CD8-positive, alpha-beta memory T cell (primary cell): ENCODE measurements at regions of chr7 and their contacts with region 1.

Region 1: DNA sequence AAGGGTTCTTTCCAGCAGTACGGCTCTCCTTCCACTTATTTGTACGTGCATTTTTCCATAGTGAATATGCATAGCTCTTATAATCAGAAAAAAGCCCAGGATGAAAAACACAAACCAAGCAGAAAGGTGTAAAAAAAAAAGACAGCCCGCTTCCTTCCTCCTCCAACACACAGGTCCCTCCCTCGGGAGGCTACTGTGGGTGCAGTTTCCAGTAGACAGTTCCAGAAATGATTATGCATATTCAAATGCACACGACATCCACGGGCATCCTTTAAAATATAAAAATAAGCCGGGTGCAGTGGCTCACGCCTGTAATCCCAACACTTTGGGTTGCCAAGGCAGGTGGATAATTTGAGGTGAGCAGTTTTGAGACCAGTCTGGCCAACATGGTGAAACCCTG is 59.9 kb downstream of the TNRC18 start:
- DNase-seq: no peak
- H3K4me3 ChIP-seq: no peak overlapping the region
- H3K4me3 Mint-ChIP-seq: peak overlapping the region in 3 of 7 donors; percentile 44 to 63 (median 59)
- H3K27ac ChIP-seq: no peak overlapping the region
- H3K27ac Mint-ChIP-seq: peak overlapping the region in 3 of 8 donors; percentile 10 to 64 (median 21)
- H3K4me1 ChIP-seq: peaks cover 5% of the 10 kb centered on the region
- H3K4me1 Mint-ChIP-seq: peaks cover 13 to 26% (median 23%) of the 10 kb centered on the region in 3 donors
- H3K27me3 ChIP-seq: no peaks in the 10 kb centered on the region
- H3K27me3 Mint-ChIP-seq: no peaks in the 10 kb centered on the region

Region 2: DNA sequence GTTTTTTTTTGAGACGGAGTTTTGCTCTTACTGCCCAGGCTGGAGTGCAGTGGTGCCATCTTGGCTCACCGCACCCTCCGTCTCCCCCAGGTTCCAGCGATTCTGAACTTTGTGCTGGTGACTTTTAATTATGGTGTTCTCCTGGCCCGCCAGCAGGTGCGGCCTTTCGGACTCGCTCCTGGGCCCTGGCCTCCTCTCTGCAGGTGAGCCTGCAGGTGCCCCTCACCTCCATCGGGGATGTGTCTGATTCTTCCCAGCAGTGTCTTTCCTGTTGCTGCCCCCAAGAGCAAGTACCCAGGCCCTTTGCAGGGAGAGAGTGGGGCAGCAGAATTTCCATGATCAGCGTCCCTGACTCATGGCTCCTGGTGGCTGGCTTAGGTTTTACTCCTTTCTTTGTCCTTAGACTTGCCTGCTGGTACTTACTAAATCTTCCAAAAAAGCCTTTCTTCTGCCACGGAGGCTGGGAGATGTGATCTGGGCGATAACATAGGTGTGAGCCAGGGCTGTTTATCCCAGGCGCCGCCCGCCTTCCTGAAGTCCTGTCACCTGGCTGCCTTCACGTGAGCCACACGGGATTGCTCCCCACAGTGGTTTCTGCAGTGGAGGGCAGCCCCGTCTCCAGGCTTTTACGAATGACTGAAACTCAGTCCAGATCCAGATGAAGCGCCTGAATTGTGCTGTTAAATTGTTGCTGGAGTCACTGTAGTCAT is 163.0 kb before region 1 on chr7:
- CTCF ChIA-PET with region 1: no interaction called
- POLR2A ChIA-PET with region 1: no interaction called
- DNase-seq: no peak
- H3K4me3 ChIP-seq: no peak overlapping the region
- H3K4me3 Mint-ChIP-seq: no peak overlapping the region
- H3K27ac ChIP-seq: no peak overlapping the region
- H3K27ac Mint-ChIP-seq: peak overlapping the region in 1 of 8 donors; percentile 42
- H3K4me1 ChIP-seq: no peaks in the 10 kb centered on the region
- H3K4me1 Mint-ChIP-seq: peaks cover 15 to 31% (median 25%) of the 10 kb centered on the region in 3 donors
- H3K27me3 ChIP-seq: no peaks in the 10 kb centered on the region
- H3K27me3 Mint-ChIP-seq: no peaks in the 10 kb centered on the region

Region 3: DNA sequence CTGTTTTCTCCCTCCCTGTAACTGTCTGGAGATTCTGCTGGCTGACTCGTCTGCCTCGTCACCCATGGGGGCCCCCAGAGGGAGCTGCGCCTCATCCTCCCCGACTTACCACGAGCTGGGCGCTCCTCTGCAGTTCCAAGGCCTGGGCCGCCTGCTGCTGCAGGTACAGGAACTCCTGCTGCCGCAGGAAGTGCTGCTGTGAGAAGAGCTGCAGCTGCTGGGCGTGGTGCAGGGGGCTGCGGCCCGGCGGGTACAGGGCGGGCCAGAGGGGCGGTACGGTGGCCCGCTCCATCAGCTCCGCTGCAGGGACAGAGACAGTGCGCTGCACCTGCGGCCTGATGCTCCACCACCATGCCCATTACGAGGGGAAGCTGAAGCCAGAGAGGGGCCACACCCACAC is 12.2 kb after region 1 on chr7:
- CTCF ChIA-PET with region 1: interaction called, 12 read pairs
- POLR2A ChIA-PET with region 1: interaction called, 3 read pairs
- DNase-seq: peak in 3 of 5 donors; percentile 10 to 66 (median 21)
- H3K4me3 ChIP-seq: no peak overlapping the region
- H3K4me3 Mint-ChIP-seq: peak overlapping the region in 4 of 7 donors; percentile 12 to 83 (median 36)
- H3K27ac ChIP-seq: no peak overlapping the region
- H3K27ac Mint-ChIP-seq: peak overlapping the region in 5 of 8 donors; percentile 24 to 89 (median 63)
- H3K4me1 ChIP-seq: no peaks in the 10 kb centered on the region
- H3K4me1 Mint-ChIP-seq: peaks cover 7 to 28% (median 10%) of the 10 kb centered on the region in 3 donors
- H3K27me3 ChIP-seq: no peaks in the 10 kb centered on the region
- H3K27me3 Mint-ChIP-seq: peaks cover 0 to 2% of the 10 kb centered on the region in 2 donors

Region 4: DNA sequence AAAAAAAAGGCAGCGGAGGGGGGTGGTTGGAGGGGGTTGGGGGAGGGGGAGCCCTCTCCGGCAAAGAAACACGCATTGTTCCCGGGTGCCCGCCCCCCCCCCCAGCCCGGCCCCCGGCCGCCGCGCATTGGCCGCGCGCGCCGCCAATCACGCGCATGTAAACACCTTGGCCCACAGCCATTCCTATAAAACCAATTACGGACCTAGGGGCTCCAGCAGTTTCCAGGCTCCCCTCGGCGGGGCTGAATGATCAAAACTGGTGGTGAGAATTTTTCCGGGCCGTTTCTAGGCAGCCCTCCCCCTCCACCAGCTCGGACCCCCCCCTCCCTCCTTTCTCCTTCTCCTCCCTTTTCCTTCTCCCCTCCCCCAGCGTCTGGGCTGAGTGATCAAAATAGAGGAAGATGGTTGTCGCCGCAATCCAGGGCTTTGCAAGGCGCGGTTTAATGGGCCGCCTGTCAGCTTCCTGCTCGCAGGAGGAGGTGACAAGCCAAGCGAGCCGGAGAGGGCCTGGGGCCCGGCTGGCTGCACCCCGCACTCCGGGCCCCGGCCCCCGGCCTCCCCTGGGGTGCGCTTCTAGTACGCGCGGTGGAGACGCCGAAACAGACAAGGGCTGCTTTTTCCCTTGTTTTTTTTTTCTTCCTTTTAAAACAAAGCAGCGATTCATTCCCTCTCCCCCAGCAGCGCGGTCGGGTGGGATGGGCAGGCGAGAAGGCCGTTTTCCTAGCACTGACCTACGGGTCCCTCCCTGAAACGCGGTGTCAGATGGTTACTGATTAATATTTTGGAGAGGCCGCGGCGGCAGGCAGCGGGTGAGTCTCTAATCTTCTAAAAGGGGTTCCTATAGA is 60.3 kb after region 1 on chr7:
- CTCF ChIA-PET with region 1: interaction called, 10 read pairs
- POLR2A ChIA-PET with region 1: no interaction called
- DNase-seq: peak in 4 of 5 donors; percentile 26 to 64 (median 42)
- H3K4me3 ChIP-seq: peak overlapping the region; percentile 37
- H3K4me3 Mint-ChIP-seq: peak overlapping the region; percentile 76 to 89 (median 83)
- H3K27ac ChIP-seq: peak overlapping the region; percentile 85
- H3K27ac Mint-ChIP-seq: peak overlapping the region in 5 of 8 donors; percentile 38 to 83 (median 53)
- H3K4me1 ChIP-seq: peaks cover 62% of the 10 kb centered on the region
- H3K4me1 Mint-ChIP-seq: peaks cover 34 to 77% (median 44%) of the 10 kb centered on the region in 3 donors
- H3K27me3 ChIP-seq: peaks cover 66% of the 10 kb centered on the region
- H3K27me3 Mint-ChIP-seq: peaks cover 48 to 63% of the 10 kb centered on the region in 2 donors

Region 5: GRCh38 chr7:5450549-5451372 is 87.0 kb after region 1 on chr7:
- CTCF ChIA-PET with region 1: interaction called, 12 read pairs
- POLR2A ChIA-PET with region 1: no interaction called
- DNase-seq: peak in 3 of 5 donors; percentile 27 to 65 (median 47)
- H3K4me3 ChIP-seq: no peak overlapping the region
- H3K4me3 Mint-ChIP-seq: no peak overlapping the region
- H3K27ac ChIP-seq: no peak overlapping the region
- H3K27ac Mint-ChIP-seq: peak overlapping the region in 1 of 8 donors; percentile 88
- H3K4me1 ChIP-seq: no peaks in the 10 kb centered on the region
- H3K4me1 Mint-ChIP-seq: no peaks in the 10 kb centered on the region
- H3K27me3 ChIP-seq: no peaks in the 10 kb centered on the region
- H3K27me3 Mint-ChIP-seq: peaks cover 0 to 2% of the 10 kb centered on the region in 2 donors